PC-3 (cell line): ENCODE measurements at regions of chr3 and their contacts with region 1.

Region 1: GRCh38 chr3:177197041-177197727 is at the start of gene TBL1XR1:
- DNase-seq: peak; percentile 91
- ATAC-seq: peak; percentile 67
- H3K4me3 ChIP-seq: peak within 1 kb of the TSS; percentile 92
- H3K27ac ChIP-seq: peak within 1 kb of the TSS; percentile 87
- H3K4me1 ChIP-seq: peaks cover 31% of the 10 kb centered on the region
- H3K27me3 ChIP-seq: no peaks in the 10 kb centered on the region
- CTCF ChIP-seq: no peak
- total RNA-seq, gene TBL1XR1: 77.6 and 109 TPM in 2 replicates

Region 2: DNA sequence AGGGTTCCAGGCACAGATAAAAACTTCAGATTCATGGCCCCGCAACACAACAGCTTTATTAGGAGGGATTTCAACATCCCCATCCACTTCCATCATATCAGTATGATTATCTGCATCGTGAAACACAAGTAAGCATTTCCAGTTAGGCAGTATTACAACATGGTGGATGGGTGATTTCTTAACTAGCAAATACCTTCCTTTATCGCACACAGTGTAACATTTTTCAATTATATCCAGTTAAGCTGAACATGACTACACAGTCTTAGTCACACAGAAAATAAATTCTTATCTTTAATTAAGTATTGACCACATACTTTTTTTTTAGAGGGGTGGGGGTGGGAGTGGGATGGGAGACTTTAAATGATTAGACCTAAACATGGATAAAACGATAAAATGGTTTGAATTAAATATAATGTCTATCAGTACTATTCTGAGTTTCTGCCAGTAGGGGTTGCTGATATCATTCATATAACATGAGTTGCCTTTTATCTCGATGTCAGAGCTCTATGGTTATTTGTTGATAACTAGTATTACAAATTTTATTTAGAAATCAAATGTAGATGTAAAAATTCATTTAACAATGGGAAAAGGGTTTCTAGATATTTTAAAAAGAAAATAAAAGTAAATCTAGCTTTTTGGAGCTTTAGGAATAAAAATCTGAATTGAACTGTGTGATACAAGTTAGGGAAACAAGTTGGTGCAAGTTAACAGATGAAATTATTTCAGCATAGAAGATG is 146.5 kb before region 1 on chr3:
- CTCF ChIA-PET with region 1: interaction called, 5 read pairs
- POLR2A ChIA-PET with region 1: interaction called, 7 read pairs
- intact Hi-C with region 1: loop called (anchors 1 kb)
- DNase-seq: peak; percentile 67
- ATAC-seq: peak; percentile 71
- H3K4me3 ChIP-seq: no peak overlapping the region
- H3K27ac ChIP-seq: no peak overlapping the region
- H3K4me1 ChIP-seq: no peaks in the 10 kb centered on the region
- H3K27me3 ChIP-seq: no peaks in the 10 kb centered on the region
- CTCF ChIP-seq: peak; percentile 75

Region 3: GRCh38 chr3:177169936-177170722 is 27.1 kb before region 1 on chr3:
- CTCF ChIA-PET with region 1: no interaction called
- POLR2A ChIA-PET with region 1: no interaction called
- intact Hi-C with region 1: no loop called
- DNase-seq: no peak
- ATAC-seq: no peak
- H3K4me3 ChIP-seq: no peak overlapping the region
- H3K27ac ChIP-seq: no peak overlapping the region
- H3K4me1 ChIP-seq: no peaks in the 10 kb centered on the region
- H3K27me3 ChIP-seq: no peaks in the 10 kb centered on the region
- CTCF ChIP-seq: no peak

Region 4: GRCh38 chr3:177220136-177220974 is 23.2 kb after region 1 on chr3:
- CTCF ChIA-PET with region 1: no interaction called
- POLR2A ChIA-PET with region 1: no interaction called
- intact Hi-C with region 1: no loop called
- DNase-seq: no peak
- ATAC-seq: no peak
- H3K4me3 ChIP-seq: no peak overlapping the region
- H3K27ac ChIP-seq: no peak overlapping the region
- H3K4me1 ChIP-seq: no peaks in the 10 kb centered on the region
- H3K27me3 ChIP-seq: no peaks in the 10 kb centered on the region
- CTCF ChIP-seq: no peak

Region 5: GRCh38 chr3:177306252-177306651 is 109.1 kb after region 1 on chr3:
- CTCF ChIA-PET with region 1: no interaction called
- POLR2A ChIA-PET with region 1: no interaction called
- intact Hi-C with region 1: loop called (anchors 5 kb)
- DNase-seq: peak; percentile 89
- ATAC-seq: peak; percentile 78
- H3K4me3 ChIP-seq: no peak overlapping the region
- H3K27ac ChIP-seq: no peak overlapping the region
- H3K4me1 ChIP-seq: peaks cover 10% of the 10 kb centered on the region
- H3K27me3 ChIP-seq: no peaks in the 10 kb centered on the region
- CTCF ChIP-seq: no peak

Region 6: GRCh38 chr3:177525987-177526712 is 329.0 kb after region 1 on chr3:
- CTCF ChIA-PET with region 1: no interaction called
- POLR2A ChIA-PET with region 1: no interaction called
- intact Hi-C with region 1: loop called (anchors 5 kb)
- DNase-seq: peak; percentile 37
- ATAC-seq: peak; percentile 66
- H3K4me3 ChIP-seq: no peak overlapping the region
- H3K27ac ChIP-seq: peak overlapping the region; percentile 35
- H3K4me1 ChIP-seq: peaks cover 33% of the 10 kb centered on the region
- H3K27me3 ChIP-seq: no peaks in the 10 kb centered on the region
- CTCF ChIP-seq: no peak

Region 7: GRCh38 chr3:177777699-177778098 is 580.5 kb after region 1 on chr3:
- CTCF ChIA-PET with region 1: no interaction called
- POLR2A ChIA-PET with region 1: no interaction called
- intact Hi-C with region 1: loop called (anchors 5 kb)
- DNase-seq: peak; percentile 67
- ATAC-seq: peak; percentile 67
- H3K4me3 ChIP-seq: no peak overlapping the region
- H3K27ac ChIP-seq: no peak overlapping the region
- H3K4me1 ChIP-seq: peaks cover 20% of the 10 kb centered on the region
- H3K27me3 ChIP-seq: no peaks in the 10 kb centered on the region
- CTCF ChIP-seq: peak; percentile 73